Right lobe of liver (tissue), 6 donors: ENCODE measurements at regions of chr15 and their contacts with region 1.

Region 1: DNA sequence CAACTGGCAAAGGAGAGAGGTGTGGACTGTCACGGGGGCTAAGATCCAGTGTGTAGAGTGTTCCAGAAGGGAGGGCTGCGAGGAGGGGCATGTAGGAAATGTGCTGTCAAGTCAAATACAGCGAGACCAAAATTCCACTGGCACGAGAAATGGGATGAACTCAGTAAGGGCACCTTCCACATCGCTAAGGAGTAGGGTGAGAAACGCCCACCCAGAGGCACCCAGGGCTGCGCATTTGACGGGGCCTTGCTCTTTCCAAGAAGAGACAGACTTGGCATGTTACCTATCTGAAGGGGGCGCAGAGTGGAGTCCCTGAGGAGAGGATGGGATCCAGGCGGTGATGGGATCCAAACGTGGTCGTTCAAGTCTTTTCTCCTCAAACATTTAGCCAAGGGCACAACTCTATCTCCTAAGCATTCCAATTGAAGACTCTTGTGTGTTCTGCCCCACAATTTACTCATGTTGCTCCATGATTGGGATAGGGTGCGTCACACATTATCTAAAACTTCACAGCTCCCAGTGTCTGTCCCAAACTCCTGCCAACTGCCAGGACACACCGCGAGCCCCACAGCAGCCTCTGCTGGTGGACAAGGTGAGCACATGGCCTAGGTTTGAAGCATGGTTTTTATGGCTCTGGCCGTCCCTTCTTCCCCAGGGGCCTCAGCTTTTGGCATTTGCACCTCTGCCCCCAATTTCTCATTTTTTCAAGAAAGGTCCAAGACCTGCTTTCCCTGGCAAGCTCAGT is 7.6 kb downstream of the SELENOS start:
- DNase-seq: no peak
- ATAC-seq: peak; percentile 46 to 64 (median 53)
- H3K4me3 ChIP-seq: no peak overlapping the region
- H3K27ac ChIP-seq: no peak overlapping the region
- H3K4me1 ChIP-seq: no peaks in the 10 kb centered on the region
- H3K27me3 ChIP-seq: no peaks in the 10 kb centered on the region
- CTCF ChIP-seq: peak; percentile 15 to 38 (median 24)
- POLR2A ChIP-seq: no peak

Region 2: GRCh38 chr15:100918034-100918689 is 351.5 kb before region 1 on chr15:
- intact Hi-C with region 1: loop called in 1 of 2 experiments (anchors 10 kb)
- DNase-seq: peak; percentile 73 to 82 (median 81)
- ATAC-seq: peak; percentile 91 to 94 (median 94)
- H3K4me3 ChIP-seq: peak overlapping the region; percentile 46 to 53 (median 52)
- H3K27ac ChIP-seq: peak overlapping the region in 1 of 3 donors; percentile 1
- H3K4me1 ChIP-seq: no peaks in the 10 kb centered on the region
- H3K27me3 ChIP-seq: no peaks in the 10 kb centered on the region
- CTCF ChIP-seq: peak; percentile 82 to 91 (median 86)
- POLR2A ChIP-seq: no peak

Region 3: DNA sequence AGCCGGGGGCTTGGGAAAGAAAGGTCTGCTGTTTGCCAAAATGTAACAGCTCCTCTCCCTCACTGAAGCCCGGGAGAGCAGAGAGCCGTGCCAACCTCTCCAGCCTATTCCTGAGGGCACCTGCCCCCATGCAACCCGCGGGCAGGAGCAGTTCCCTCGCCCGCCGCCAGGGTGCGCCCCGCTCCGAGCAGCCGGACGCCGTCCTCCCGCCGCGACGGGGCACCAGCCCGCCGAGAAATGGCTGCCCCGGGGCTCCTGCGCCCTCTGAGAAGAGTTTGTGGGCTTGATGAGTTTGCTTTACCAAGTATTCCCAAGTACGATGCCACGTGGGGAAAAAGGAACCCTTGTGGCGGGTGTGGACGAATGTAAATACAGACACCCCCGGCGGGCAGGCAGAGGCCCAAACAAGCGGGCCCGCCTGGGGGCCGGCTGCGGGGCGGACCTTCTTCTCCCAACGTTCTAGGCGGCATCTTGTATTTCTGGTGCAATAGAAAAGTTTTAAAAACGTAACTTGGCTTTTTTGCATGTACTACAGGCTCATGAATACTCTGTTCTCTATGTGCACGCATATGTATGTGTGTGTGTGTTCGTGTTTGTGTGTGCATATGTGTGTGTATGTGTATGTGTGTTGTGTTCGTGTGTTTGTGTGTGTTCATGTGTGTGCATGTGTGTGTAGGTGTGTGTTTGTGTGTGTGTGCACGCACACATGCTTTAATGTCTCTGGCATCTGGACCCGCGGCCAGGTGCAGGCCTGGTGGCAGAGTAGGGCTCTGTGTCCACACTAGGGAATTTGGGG is 180.7 kb before region 1 on chr15:
- intact Hi-C with region 1: loop called in 1 of 2 experiments (anchors 5 kb)
- DNase-seq: peak; percentile 74 to 77 (median 76)
- ATAC-seq: peak; percentile 88 to 95 (median 88)
- H3K4me3 ChIP-seq: no peak overlapping the region
- H3K27ac ChIP-seq: no peak overlapping the region
- H3K4me1 ChIP-seq: no peaks in the 10 kb centered on the region
- H3K27me3 ChIP-seq: no peaks in the 10 kb centered on the region
- CTCF ChIP-seq: peak; percentile 94 to 99 (median 98)
- POLR2A ChIP-seq: no peak